ENCODE measurements at regions of chr3 and their contacts with region 1.

Region 1: DNA sequence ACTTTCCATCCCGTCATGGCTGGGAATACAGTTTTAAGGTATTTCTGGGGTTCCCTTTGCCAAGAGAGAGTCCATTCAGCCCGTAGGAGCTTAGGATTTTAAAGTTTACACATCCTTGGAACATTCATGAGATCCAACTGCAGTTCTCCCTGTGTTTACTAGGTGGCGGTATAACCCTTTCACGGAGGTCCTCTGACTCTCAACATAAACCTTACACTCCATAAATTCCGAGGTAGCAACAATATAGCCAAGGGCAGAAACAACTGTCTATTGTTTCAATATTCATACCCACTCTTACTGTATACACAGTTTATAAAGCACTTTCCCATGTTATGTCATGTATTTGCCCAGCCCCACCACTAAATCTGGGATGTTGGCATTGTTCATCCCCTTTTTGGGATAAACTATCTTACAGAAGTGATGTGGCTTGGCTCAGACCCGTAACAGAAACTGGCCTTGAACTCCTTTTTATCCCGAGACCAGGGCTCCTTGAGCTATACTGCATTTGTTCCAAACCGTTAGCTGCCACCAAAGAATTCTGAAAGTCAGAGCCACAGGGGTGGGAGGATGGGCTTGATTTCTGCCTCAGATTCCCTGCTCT is 69.2 kb upstream of the COL6A5 start:
- DNase-seq: peak; percentile 66
- H3K4me3 Mint-ChIP-seq: no peak overlapping the region
- H3K27ac Mint-ChIP-seq: no peak overlapping the region
- H3K4me1 Mint-ChIP-seq: no peaks in the 10 kb centered on the region
- H3K27me3 Mint-ChIP-seq: peaks cover 6% of the 10 kb centered on the region

Region 2: DNA sequence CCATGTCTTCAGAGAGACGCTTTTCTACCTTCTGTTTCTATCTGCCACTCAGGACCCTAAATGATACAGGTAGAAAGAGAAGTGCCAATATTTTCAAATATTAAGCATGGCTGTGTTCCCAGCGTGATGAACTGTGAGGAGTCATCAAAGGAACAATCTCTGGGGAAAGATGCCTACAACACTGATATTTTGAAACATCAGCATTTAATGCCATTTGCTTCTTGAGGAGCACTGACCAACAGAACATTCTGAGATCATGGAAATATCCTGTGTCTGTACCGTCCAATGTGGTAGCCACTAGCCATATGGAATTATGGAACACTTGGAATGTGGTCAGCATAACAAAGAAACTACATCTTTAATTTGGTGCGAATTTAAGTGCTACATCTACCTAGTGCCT is 48.8 kb before region 1 on chr3:
- intact Hi-C with region 1: no loop called
- DNase-seq: no peak
- H3K4me3 Mint-ChIP-seq: no peak overlapping the region
- H3K27ac Mint-ChIP-seq: no peak overlapping the region
- H3K4me1 Mint-ChIP-seq: no peaks in the 10 kb centered on the region
- H3K27me3 Mint-ChIP-seq: peaks cover 4% of the 10 kb centered on the region

Region 3: DNA sequence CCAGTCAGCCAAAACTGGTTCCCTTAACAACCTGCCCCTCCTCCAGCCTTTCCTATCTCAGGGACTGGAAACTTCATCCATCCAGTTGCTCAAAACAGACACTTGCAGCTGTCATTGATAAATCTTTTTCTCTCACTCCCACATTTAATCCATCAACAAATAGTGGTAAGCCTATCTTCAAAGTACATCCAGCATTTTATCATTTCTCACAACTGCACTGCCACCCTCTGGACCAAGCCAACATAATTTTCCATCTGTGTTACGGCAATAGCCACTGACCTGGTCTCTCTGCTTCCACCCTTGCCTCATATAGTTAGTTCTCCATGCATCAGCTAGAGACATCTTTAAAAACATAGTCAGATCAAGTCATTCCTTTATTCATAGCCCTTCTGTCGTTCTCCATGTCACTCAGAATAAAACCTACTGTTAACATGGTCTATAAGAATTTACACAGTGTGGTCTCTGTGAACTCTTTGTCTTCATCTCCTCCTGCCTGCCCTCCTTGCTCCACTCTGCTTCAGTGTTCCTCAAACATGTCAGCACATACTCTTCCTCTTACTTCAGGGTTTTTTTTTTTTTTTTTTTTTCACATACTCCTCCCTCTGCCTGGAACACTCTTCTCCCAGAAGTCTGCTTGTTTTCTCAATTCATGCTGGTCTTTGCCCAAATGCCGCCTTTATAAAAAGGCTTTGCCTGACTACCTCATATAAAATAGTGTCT is 33.3 kb before region 1 on chr3:
- intact Hi-C with region 1: no loop called
- DNase-seq: no peak
- H3K4me3 Mint-ChIP-seq: no peak overlapping the region
- H3K27ac Mint-ChIP-seq: no peak overlapping the region
- H3K4me1 Mint-ChIP-seq: no peaks in the 10 kb centered on the region
- H3K27me3 Mint-ChIP-seq: peaks cover 2% of the 10 kb centered on the region

Region 4: DNA sequence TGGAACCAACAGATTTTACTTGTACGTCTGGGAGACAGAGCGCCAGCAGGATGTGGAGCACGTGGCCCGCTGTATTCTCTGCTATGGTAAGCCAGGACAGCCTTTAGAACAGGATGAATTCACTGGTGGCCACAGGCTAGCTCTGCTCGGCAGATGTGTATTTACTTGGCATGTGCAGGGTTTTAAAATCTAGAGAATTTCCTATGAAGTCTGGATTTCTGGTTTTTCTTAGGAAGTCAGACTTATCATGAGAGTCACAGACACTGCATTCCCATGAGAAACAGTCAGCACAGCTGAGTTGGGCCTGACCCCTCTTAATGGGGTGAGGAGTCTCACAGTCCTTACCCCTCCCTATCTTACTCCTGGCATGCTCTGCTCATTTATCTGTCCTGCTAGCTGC is 15.4 kb before region 1 on chr3:
- intact Hi-C with region 1: no loop called
- DNase-seq: no peak
- H3K4me3 Mint-ChIP-seq: no peak overlapping the region
- H3K27ac Mint-ChIP-seq: no peak overlapping the region
- H3K4me1 Mint-ChIP-seq: no peaks in the 10 kb centered on the region
- H3K27me3 Mint-ChIP-seq: peaks cover 4% of the 10 kb centered on the region

Region 5: DNA sequence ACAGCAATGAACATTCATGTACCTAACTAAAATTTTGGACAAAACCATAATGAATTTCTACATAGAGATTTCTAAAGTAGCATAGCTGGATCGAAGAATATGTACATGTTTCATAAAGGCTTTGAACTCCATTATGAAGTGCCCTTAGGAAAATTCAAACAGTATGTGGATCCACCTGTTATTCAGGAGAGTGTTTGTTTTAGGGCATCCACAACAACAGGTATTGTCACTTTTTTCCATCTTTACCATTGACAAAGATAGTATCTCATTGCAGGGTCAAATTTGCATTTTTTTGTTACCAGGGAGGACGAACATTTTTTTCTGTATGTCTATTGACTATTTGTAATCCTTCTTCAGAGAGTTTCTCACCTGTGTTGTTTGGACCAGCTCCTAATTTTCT is 144.2 kb after region 1 on chr3:
- intact Hi-C with region 1: no loop called
- DNase-seq: no peak
- H3K4me3 Mint-ChIP-seq: no peak overlapping the region
- H3K27ac Mint-ChIP-seq: no peak overlapping the region
- H3K4me1 Mint-ChIP-seq: no peaks in the 10 kb centered on the region
- H3K27me3 Mint-ChIP-seq: peaks cover 2% of the 10 kb centered on the region

Region 6: GRCh38 chr3:130539005-130539404 is 262.7 kb after region 1 on chr3:
- intact Hi-C with region 1: loop called (anchors 5 kb)
- DNase-seq: peak; percentile 73
- H3K4me3 Mint-ChIP-seq: no peak overlapping the region
- H3K27ac Mint-ChIP-seq: no peak overlapping the region
- H3K4me1 Mint-ChIP-seq: no peaks in the 10 kb centered on the region
- H3K27me3 Mint-ChIP-seq: peaks cover 7% of the 10 kb centered on the region

Measured in activated CD4-positive, alpha-beta T cell treated with anti-CD3 and anti-CD28 coated beads, Interleukin-2, amount 10 ng/mL, durations not matched to agents 24 days and 14 days (primary cell).